CD4-positive, alpha-beta memory T cell (primary cell): ENCODE measurements at regions of chr12 and their contacts with region 1.

Region 1: GRCh38 chr12:116277393-116278278 is at the start of gene MED13L:
- DNase-seq: peak; percentile 87 to 95 (median 91)
- H3K4me3 ChIP-seq: peak within 1 kb of the TSS; percentile 36 to 73
- H3K4me3 Mint-ChIP-seq: peak within 1 kb of the TSS; percentile 90 to 98 (median 96)
- H3K27ac ChIP-seq: peak within 1 kb of the TSS; percentile 51
- H3K27ac Mint-ChIP-seq: peak within 1 kb of the TSS; percentile 89 to 97 (median 93)
- H3K4me1 ChIP-seq: peaks cover 40% of the 10 kb centered on the region
- H3K4me1 Mint-ChIP-seq: peaks cover 29 to 61% (median 38%) of the 10 kb centered on the region in 4 donors
- H3K27me3 ChIP-seq: no peaks in the 10 kb centered on the region
- H3K27me3 Mint-ChIP-seq: no peaks in the 10 kb centered on the region
- total RNA-seq, gene MED13L: 150 to 156 TPM

Region 2: DNA sequence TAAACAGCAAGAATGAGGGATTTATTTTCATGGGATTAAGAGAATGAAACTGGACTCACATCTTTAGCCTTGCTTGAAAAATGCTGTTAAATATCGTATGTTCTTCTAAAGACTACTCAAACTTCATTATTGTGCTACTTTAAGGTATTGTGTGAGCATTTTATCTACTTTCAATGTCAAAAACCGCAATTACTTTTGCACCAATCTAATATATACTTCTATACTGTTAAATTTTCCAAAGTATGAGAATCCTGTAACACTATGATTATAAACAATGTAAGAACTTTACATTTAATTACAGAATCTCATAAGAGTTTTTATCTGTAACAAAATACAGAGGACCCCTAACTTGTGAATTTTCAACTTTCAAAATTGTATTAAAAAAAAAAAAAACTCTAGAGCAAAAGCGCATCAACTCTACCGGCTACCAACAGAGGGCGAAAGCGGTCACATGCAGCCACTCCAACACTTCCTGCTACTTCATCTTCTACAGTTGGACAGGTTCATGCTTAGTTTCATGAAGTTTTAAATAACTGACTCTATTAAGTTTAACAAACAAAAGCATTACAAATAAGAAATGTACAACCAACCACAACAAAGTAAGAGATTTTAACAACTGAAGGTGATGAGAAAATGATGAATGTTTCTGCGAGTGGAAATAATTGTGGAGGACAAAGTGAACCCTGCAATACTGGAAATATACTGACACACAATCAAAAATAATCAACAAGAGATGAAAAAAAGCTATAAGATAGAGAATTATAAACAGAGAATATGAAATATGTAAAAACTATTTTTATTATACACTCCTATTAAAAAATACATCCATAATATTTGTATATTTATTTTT is 211.0 kb before region 1 on chr12:
- CTCF ChIA-PET with region 1: no interaction called
- POLR2A ChIA-PET with region 1: no interaction called
- intact Hi-C with region 1: loop called (anchors 2 kb)
- DNase-seq: peak; percentile 39 to 55 (median 48)
- H3K4me3 ChIP-seq: no peak overlapping the region
- H3K4me3 Mint-ChIP-seq: peak overlapping the region in 2 of 8 donors; percentile 7 to 21
- H3K27ac ChIP-seq: no peak overlapping the region
- H3K27ac Mint-ChIP-seq: peak overlapping the region in 4 of 7 donors; percentile 0 to 75 (median 33)
- H3K4me1 ChIP-seq: peaks cover 13% of the 10 kb centered on the region
- H3K4me1 Mint-ChIP-seq: peaks cover 18 to 50% (median 29%) of the 10 kb centered on the region in 4 donors
- H3K27me3 ChIP-seq: no peaks in the 10 kb centered on the region
- H3K27me3 Mint-ChIP-seq: no peaks in the 10 kb centered on the region

Region 3: DNA sequence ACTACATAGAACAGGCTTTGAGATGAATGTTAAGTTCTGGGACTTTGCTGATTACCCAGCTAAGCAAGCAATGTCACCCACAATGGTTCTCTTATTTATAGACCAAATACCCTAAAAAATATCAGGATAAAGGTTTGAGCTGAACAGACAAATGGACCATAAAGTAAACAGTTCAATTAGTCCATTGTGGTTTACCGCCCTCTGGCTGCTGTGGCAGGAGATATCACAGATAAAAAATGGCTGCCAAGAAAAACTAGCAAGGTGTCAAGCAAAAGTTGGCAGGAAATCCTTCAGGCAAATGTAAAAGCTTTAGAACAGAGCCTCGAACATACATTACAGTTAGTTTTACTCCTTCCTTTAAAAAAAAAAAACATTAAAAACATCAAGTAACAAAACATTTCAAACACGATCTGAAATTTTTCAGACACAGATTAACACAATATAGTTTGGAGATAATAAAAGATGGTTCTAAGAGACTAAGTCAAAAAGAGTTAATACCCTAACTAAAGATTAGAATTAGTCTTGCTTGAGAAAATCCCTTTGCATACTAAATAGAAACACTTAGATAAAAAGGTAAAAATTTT is 41.4 kb before region 1 on chr12:
- CTCF ChIA-PET with region 1: interaction called, 6 read pairs
- POLR2A ChIA-PET with region 1: interaction called, 10 read pairs
- intact Hi-C with region 1: loop called (anchors 5 kb)
- DNase-seq: peak; percentile 42 to 50 (median 44)
- H3K4me3 ChIP-seq: no peak overlapping the region
- H3K4me3 Mint-ChIP-seq: peak overlapping the region in 4 of 8 donors; percentile 29 to 72 (median 40)
- H3K27ac ChIP-seq: no peak overlapping the region
- H3K27ac Mint-ChIP-seq: peak overlapping the region in 6 of 7 donors; percentile 19 to 77 (median 62)
- H3K4me1 ChIP-seq: peaks cover 21% of the 10 kb centered on the region
- H3K4me1 Mint-ChIP-seq: peaks cover 28 to 47% (median 35%) of the 10 kb centered on the region in 4 donors
- H3K27me3 ChIP-seq: no peaks in the 10 kb centered on the region
- H3K27me3 Mint-ChIP-seq: no peaks in the 10 kb centered on the region

Region 4: GRCh38 chr12:116448164-116448739 is 170.6 kb after region 1 on chr12:
- CTCF ChIA-PET with region 1: no interaction called
- POLR2A ChIA-PET with region 1: no interaction called
- intact Hi-C with region 1: no loop called
- DNase-seq: no peak
- H3K4me3 ChIP-seq: no peak overlapping the region
- H3K4me3 Mint-ChIP-seq: no peak overlapping the region
- H3K27ac ChIP-seq: no peak overlapping the region
- H3K27ac Mint-ChIP-seq: no peak overlapping the region
- H3K4me1 ChIP-seq: no peaks in the 10 kb centered on the region
- H3K4me1 Mint-ChIP-seq: peaks cover 0 to 8% (median 4%) of the 10 kb centered on the region in 4 donors
- H3K27me3 ChIP-seq: no peaks in the 10 kb centered on the region
- H3K27me3 Mint-ChIP-seq: no peaks in the 10 kb centered on the region

Region 5: DNA sequence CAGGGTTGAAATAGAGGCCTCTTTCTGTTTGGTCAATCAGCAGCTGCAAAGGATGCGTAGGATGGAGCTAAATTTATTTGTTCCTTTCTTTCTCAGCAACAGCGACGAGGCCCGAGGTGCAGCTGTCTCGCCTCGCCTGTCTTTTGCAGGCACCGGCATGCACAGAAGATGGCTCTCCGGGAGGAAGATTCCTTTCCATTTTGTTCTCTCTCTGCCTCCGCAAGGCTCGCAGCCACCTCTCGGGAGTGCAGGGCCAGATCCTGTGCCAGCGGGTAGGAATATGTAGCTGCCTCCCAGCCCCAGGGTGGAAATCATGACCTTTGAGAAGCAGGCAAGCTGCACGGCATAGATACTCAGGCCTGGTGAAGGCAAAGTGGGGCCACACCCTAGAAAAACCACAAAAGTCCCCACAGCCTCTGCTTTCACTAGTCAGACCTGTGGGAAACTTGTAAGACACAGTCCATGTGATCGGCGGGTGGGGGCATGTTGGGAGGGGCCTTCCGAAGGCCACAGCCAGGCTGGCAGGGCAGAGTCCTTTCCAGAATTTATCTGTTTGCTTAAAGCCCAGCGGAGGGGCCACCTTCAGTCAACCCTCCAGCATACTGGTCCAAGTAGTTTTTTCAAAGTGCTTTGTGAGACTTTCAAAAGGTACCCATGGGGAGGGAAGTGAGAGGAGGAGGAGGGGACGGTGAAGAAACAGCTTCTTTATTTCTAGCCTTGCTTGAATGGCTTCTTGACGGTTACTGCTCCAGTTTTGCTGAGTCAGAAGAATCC is 281.7 kb after region 1 on chr12 and contains the start of gene MAP1LC3B2:
- CTCF ChIA-PET with region 1: no interaction called
- POLR2A ChIA-PET with region 1: interaction called, 14 read pairs
- intact Hi-C with region 1: loop called (anchors 1 kb)
- DNase-seq: peak; percentile 85 to 91 (median 89)
- H3K4me3 ChIP-seq: peak within 1 kb of the TSS; percentile 18 to 29
- H3K4me3 Mint-ChIP-seq: peak within 1 kb of the TSS; percentile 81 to 97 (median 86)
- H3K27ac ChIP-seq: peak within 1 kb of the TSS; percentile 33
- H3K27ac Mint-ChIP-seq: peak within 1 kb of the TSS; percentile 95 to 98 (median 97)
- H3K4me1 ChIP-seq: peaks cover 47% of the 10 kb centered on the region
- H3K4me1 Mint-ChIP-seq: peaks cover 29 to 48% (median 41%) of the 10 kb centered on the region in 4 donors
- H3K27me3 ChIP-seq: no peaks in the 10 kb centered on the region
- H3K27me3 Mint-ChIP-seq: no peaks in the 10 kb centered on the region
- total RNA-seq, gene MAP1LC3B2: 1.7 to 2.9 TPM

Region 6: GRCh38 chr12:116737774-116738700 is 460.4 kb after region 1 on chr12 and contains the starts of genes RNFT2 and SPRING1:
- CTCF ChIA-PET with region 1: no interaction called
- POLR2A ChIA-PET with region 1: no interaction called
- intact Hi-C with region 1: loop called (anchors 1 kb)
- DNase-seq: peak; percentile 99
- H3K4me3 ChIP-seq: peak within 1 kb of the TSS; percentile 58 to 98
- H3K4me3 Mint-ChIP-seq: peak within 1 kb of the TSS; percentile 92 to 98 (median 95)
- H3K27ac ChIP-seq: peak within 1 kb of the TSS; percentile 50
- H3K27ac Mint-ChIP-seq: peak within 1 kb of the TSS; percentile 87 to 95 (median 92)
- H3K4me1 ChIP-seq: peaks cover 27% of the 10 kb centered on the region
- H3K4me1 Mint-ChIP-seq: peaks cover 17 to 48% (median 31%) of the 10 kb centered on the region in 4 donors
- H3K27me3 ChIP-seq: no peaks in the 10 kb centered on the region
- H3K27me3 Mint-ChIP-seq: no peaks in the 10 kb centered on the region
- total RNA-seq, gene RNFT2: 4.0 to 5.9 TPM
- total RNA-seq, gene SPRING1: 26.5 to 28.1 TPM